Left colon (tissue), 2 donors: ENCODE measurements at regions of chr2 and their contacts with region 1.

Region 1: DNA sequence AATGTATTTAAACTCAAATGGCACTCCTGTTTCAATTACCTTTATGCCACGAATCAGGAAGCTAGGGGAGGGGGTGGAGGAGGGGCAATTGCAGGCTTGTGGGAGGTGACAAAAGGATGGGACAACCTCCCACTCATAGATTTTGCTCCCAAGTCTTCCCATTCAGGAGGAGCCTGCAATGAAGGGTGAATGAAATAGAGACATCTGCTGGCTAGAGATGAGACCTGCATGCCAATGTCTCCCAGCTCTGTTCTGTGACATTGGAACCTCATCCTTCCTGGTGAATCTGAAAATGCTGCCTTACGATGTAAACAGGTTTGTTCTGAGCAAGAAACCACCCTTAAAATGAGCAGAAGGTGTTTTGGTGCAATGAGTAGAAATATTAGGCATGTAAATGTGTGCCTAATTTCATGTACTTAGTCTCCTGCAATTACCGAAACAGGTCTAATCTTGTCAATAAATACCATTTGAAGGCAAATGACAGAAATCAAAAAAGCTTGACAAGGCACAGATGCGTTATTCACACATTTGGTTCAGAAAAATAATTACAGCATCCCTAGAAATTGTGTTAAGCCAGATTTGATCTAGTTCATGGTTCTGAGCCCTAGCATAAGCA is 2.7 kb upstream of the PID1 start:
- DNase-seq: peak; percentile 80 to 88
- ATAC-seq: peak; percentile 88

Region 2: DNA sequence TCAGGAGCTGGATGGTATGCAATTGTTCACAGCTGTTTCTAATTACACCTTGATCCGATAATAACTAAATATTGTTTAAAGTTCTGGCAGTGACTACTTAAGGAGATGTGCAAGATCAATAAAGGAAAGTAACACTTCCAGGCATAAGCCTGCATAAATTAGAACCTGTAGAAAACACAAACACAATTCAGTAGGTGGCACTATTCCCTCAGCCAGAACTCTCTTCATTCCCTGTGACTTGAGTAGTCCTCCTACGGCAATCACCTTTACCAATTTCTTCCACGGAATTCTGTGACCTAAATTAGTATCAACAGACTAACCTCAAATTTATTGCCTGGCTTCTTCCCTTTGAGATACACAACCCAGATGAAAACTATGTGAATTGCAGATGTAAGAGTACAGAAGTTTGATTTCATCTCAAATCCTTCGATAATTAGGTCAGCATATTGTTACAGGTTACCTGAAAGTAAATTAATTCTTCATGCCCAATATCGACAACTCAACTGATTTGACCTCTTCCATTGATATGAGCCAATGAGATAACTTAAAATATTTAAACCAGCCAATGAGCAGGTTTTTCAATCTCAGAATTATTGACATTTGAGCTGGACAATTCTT is 140.6 kb before region 1 on chr2:
- intact Hi-C with region 1: loop called in 1 of 2 experiments (anchors 5 kb)
- DNase-seq: no peak
- ATAC-seq: peak; percentile 49